ENCODE measurements at regions of chr22 and their contacts with region 1.

Region 1: DNA sequence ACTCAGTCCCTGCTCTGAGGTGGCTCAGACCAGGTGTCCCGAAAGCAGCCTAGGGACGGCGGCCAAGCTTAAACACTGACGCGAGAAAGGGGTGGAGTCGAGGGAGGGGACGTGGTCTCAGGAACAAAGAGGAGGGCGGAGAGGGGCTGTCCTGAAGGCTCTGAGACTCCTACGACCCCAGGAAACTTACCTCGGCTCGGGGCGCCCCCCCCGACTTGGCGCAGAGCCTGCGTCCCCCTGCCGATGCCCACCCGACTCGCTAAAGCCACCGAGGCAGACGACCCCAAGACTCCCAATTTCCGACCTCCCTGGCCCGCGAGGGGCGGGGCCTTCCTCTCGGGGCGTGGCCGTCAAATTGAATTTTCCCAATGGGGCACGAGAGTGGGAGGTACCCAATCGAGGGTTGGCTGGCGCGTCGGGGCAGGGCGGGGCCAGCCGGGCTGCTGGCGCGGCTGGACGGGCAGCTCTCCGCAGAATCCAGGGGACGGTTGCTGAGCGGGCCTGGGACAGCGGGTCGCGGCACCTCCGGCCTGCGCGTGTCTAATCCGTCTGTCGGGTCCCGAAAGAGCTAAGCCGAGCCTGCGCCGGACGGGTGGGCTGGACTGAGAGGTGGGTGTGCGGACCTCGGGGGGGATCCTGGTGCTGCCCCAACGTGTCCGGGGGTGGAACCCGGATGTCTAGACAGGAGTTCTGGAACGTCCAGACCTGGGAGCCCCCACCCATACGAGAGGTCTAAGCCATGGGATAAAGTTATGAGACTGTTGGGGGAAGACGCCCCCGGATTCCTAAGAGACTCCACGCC is at the start of gene SMTN:
- H3K4me3 Mint-ChIP-seq: peak within 1 kb of the TSS; percentile 88
- H3K27ac Mint-ChIP-seq: peak within 1 kb of the TSS; percentile 80
- H3K4me1 Mint-ChIP-seq: peaks cover 54% of the 10 kb centered on the region
- H3K27me3 Mint-ChIP-seq: peaks cover 5% of the 10 kb centered on the region

Region 2: GRCh38 chr22:30947816-30948454 is 133.1 kb before region 1 on chr22:
- intact Hi-C with region 1: loop called (anchors 1 kb)
- H3K4me3 Mint-ChIP-seq: no peak overlapping the region
- H3K27ac Mint-ChIP-seq: no peak overlapping the region
- H3K4me1 Mint-ChIP-seq: no peaks in the 10 kb centered on the region
- H3K27me3 Mint-ChIP-seq: no peaks in the 10 kb centered on the region

Region 3: DNA sequence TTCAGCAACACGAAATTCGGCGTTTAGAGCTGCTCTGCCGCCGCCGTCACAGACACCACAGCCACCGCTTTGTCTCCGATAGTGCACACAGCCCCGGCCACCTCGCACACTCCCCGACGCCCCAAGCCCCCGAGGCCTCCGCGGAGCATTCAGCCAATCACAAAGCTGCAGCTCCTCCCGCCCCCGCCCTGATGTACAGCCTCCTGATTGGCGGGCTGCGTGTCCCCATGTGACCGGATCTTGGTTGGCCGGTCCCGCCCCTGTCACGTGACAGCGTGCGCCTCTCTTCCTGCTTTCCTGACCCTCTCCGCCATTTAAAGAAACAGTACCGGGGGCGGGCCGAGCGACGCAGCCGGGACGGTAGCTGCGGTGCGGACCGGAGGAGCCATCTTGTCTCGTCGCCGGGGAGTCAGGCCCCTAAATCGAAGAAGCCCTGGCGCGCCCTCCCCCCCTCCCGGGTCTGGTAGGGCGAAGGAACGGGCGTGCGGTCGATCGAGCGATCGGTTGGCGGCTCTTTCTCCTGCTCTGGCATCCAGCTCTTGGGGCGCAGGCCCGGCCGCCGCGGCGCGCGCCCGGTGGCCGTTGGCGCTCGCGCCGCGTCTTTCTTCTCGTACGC is 112.0 kb before region 1 on chr22 and contains the start of gene TUG1:
- intact Hi-C with region 1: loop called (anchors 5 kb)
- H3K4me3 Mint-ChIP-seq: peak within 1 kb of the TSS; percentile 85
- H3K27ac Mint-ChIP-seq: peak within 1 kb of the TSS; percentile 84
- H3K4me1 Mint-ChIP-seq: peaks cover 37% of the 10 kb centered on the region
- H3K27me3 Mint-ChIP-seq: no peaks in the 10 kb centered on the region

Region 4: DNA sequence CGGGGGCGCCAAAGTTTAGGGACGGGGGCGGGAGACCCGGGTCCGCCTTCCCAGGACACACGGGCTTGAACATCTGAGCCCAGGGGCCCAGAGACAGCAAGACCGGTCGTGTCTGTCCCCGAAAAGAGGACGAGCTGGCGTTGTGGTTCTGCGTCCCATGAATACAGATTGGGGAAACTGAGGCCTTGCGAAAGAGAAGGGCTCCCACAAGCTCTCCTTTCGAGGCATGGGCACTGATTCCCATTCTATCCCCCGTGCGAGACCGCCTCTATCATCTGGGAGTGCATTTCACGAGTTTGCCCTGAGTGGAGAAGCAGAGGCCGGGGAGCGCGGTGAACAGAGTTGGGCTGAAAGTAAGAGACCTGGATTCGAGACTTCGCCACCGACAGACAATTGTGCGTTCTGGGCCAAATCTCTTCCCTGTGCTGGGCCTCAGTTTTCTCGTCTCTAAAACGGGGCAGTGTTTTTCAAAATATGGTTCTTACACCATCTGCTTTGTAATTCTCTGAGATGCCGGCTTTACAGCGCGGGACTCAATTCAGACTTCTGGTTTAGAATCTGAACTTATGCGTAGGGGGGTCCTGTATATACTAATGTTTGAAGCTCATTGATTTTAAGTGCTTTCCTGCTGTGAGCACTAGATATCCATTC is 79.4 kb after region 1 on chr22:
- intact Hi-C with region 1: loop called (anchors 5 kb)
- H3K4me3 Mint-ChIP-seq: peak overlapping the region; percentile 91
- H3K27ac Mint-ChIP-seq: peak overlapping the region; percentile 93
- H3K4me1 Mint-ChIP-seq: peaks cover 39% of the 10 kb centered on the region
- H3K27me3 Mint-ChIP-seq: peaks cover 7% of the 10 kb centered on the region

Region 5: DNA sequence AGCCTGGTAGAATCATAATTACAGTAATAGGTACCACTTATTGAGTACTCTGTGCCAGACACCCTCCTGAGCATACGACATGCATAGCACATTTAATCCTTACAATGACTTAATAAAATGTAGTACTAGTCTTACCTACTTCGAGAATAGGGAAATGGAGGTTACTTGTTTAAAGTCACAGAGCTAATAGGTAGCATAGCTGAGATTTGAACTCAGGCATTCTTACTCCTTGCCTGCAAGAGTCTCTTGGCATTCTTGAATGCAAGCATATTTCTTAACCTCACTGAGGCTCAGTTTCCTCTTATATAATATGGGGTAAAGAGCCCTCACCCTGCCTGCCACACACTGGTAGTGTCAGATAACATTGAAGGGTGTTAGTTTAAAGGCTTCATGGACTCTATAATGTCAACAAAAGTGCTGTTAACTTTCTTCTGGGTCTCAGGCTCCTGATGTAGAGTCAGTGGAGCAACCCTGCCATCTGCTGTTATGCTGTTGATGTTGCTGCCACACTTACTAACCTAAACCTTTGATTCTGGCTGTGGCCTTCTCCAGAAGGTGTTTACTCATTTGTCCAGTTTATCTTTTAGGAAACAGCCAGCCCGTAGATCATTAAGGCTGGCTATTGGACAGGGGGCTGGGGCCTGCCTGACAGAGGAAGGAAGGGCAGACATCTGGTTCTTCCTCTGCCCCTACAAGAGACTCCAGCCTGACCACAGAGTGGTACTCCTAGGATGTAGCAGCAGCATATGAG is 150.0 kb after region 1 on chr22:
- intact Hi-C with region 1: loop called (anchors 1 kb)
- H3K4me3 Mint-ChIP-seq: peak overlapping the region; percentile 17
- H3K27ac Mint-ChIP-seq: peak overlapping the region; percentile 89
- H3K4me1 Mint-ChIP-seq: peaks cover 77% of the 10 kb centered on the region
- H3K27me3 Mint-ChIP-seq: no peaks in the 10 kb centered on the region

Region 6: GRCh38 chr22:31272522-31273446 is 191.7 kb after region 1 on chr22:
- intact Hi-C with region 1: loop called (anchors 10 kb)
- H3K4me3 Mint-ChIP-seq: no peak overlapping the region
- H3K27ac Mint-ChIP-seq: no peak overlapping the region
- H3K4me1 Mint-ChIP-seq: no peaks in the 10 kb centered on the region
- H3K27me3 Mint-ChIP-seq: no peaks in the 10 kb centered on the region

Measured in dendritic cell treated with granulocyte-macrophage colony-stimulating factor and Interleukin-4, amounts not matched to agents 40 ng/mL and 50 ng/mL, for 4 days (primary cell).